A549 (cell line): ENCODE measurements at regions of chr2 and their contacts with region 1.

Region 1: DNA sequence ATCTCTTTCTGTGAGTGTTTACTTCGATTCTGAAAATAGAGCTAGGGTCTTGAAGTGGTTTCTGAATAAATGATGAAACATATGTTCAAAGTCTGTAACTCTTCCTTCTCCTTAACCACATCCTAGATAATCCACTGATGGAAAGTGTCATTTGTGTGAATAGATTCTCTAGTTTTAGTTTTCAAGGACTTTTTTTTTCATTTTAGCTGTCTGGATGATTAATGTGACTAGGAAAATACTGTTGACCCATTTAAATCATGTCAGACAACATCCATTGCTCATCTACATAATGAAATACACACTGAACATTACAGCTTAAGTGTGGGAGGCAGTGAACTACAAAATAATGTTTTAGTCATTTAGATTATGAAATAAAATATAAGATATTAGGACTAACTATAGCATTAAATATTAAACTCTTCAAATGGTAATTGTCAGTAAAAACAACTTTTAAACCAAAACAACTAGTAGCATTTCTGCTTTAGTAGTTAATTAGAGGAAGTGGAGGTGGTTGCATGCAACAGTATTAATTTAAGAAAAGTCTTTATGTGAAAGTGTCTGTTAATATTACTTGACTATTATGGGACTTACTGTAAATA is 39.1 kb upstream of the DLX1 start:
- DNase-seq: no peak
- ATAC-seq: no peak
- H3K4me3 ChIP-seq: no peak overlapping the region
- H3K27ac ChIP-seq: no peak overlapping the region
- H3K4me1 ChIP-seq: peaks cover 6% of the 10 kb centered on the region; the same call in 2 of the 3 replicates
- CTCF ChIP-seq: no peak
- EP300 ChIP-seq: no peak
- POLR2A ChIP-seq: no peak
- RAD21 ChIP-seq: no peak

Region 2: DNA sequence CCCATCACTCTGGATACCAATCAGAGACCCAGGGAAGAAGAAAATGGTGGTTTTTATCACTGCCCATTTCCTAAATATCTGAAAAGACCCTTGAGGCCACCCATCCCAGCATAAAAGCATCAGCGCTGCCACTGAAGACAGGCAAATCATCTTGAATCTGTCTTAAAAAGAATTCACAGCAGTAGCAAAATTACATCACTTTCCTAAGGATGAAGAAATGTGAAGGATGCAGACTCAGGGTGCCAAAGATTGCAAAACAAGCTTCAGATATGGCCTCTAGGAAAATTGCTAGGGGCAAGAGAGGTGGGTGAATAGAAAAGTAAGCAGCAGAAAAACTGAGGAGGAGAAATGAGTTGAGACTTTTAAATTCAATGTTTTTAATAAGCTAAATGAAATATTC is 222.1 kb before region 1 on chr2:
- CTCF ChIA-PET with region 1: no interaction called
- POLR2A ChIA-PET with region 1: interaction called, 12 read pairs
- DNase-seq: no peak
- ATAC-seq: no peak
- H3K4me3 ChIP-seq: no peak overlapping the region
- H3K27ac ChIP-seq: no peak overlapping the region
- H3K4me1 ChIP-seq: no peaks in the 10 kb centered on the region
- CTCF ChIP-seq: no peak
- EP300 ChIP-seq: no peak
- POLR2A ChIP-seq: no peak
- RAD21 ChIP-seq: no peak

Region 3: GRCh38 chr2:171999604-172000469 is 46.3 kb before region 1 on chr2 and contains the start of gene METAP1D:
- CTCF ChIA-PET with region 1: no interaction called
- POLR2A ChIA-PET with region 1: no interaction called
- DNase-seq: peak; percentile 81 to 89
- ATAC-seq: peak; percentile 98 to 99
- H3K4me3 ChIP-seq: peak within 1 kb of the TSS; percentile 64
- H3K27ac ChIP-seq: peak within 1 kb of the TSS; percentile 79 to 92
- H3K4me1 ChIP-seq: peaks cover 11% of the 10 kb centered on the region; the same call in 2 of the 3 replicates
- CTCF ChIP-seq: no peak
- EP300 ChIP-seq: no peak
- POLR2A ChIP-seq: peak; percentile 94
- RAD21 ChIP-seq: peak in 1 of 2 experiments; percentile 27; a peak in 3 of 5 replicates
- polyA plus RNA-seq, gene METAP1D: 10.4 and 13.3 TPM in 2 replicates